ENCODE measurements at regions of chr6 and their contacts with region 1.

Region 1: DNA sequence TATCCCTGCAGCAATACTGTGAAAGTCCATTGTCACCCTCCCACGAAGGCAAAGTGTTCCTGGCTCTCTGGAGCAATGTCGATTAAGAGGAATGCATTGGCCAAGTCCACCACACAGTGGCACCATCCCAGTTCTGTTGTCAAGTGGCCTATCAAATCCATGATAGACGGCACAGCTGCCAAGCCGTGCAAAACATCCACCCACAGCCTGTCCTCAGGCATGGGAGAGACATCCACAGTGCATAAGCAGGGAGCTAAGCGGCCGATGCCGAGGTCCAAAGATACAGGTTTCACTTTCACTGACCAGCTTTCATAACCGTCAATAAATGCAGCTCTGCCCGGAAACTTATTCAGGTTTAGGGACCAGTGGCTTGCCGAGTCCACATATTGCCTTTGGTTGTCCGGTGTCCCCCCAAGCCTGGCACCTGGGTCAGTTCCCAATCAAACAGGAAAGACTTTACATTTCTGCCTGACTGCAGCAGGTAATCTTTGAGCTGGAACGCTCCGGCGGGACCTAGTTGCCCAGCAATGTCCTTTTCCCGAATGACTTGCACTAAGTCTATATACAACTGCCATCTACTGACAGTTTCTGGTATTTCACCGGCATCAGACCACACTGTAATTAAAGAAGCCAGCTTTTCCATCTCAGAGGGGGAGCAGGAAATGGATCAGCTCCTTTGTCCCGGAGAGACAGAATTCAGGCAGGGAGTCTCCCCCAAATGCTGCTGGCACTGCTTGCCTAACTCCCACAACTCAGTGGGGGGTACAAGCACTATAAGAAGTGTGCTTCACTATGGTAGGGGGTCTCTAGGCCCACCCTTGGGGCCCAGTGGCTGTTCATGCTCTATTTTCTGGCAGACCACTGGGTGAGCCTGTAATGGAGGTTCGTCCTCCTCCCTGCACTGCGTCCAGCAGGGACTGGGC is 6.3 kb downstream of the ZKSCAN3 start:
- DNase-seq: peak; percentile 70
- ATAC-seq: peak; percentile 91
- H3K4me3 Mint-ChIP-seq: peak overlapping the region; percentile 82
- H3K27ac Mint-ChIP-seq: peak overlapping the region; percentile 80
- H3K4me1 Mint-ChIP-seq: peaks cover 21% of the 10 kb centered on the region
- H3K27me3 Mint-ChIP-seq: no peaks in the 10 kb centered on the region
- CTCF ChIP-seq: peak; percentile 90

Region 2: DNA sequence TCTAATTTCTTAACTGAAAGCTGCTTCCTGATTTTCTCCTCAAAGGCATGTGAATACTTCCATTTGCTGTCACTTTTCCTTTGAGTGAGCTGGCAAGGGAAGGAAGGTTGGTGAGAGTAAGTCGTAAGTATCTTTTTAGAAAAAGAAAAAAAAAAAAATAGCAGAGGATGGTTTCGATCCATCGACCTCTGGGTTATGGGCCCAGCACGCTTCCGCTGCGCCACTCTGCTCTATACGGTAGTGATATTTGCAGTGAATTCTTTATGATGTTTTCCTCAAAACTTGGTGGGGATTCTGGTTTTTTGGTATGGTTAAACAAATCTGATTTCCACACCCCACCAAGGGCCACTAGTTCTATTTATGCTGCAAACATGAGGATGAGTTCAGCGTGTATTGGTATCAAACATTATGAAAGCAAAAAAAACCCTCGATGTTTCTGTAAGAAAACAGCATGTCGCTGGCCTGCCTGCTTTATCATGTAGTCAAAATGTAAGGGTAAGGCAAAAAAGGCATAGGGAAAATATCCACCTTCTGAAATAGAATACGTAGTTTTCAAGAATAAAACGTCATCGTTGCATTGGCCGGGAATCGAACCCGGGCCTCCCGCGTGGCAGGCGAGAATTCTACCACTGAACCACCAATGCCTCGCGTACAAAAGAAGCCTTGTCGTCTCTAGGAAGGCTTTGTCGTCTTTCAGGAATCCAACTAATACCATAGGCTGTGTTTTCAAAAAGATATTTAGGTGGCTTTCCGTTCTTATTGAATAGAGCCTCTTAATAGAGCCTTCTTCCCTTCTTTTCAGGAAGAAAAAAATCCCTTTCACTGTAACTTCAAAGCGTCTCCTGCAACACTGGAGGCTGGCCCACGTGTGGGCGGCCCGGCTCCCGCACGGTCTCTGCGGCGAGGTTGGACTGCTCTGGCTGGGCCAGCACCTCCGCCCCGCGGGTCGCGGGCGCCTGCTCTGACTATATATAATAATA is 453.4 kb before region 1 on chr6:
- CTCF ChIA-PET with region 1: interaction called, 3 read pairs
- POLR2A ChIA-PET with region 1: no interaction called
- intact Hi-C with region 1: loop called (anchors 10 kb)
- DNase-seq: peak; percentile 91
- ATAC-seq: peak; percentile 74
- H3K4me3 Mint-ChIP-seq: peak overlapping the region; percentile 78
- H3K27ac Mint-ChIP-seq: peak overlapping the region; percentile 90
- H3K4me1 Mint-ChIP-seq: peaks cover 7% of the 10 kb centered on the region
- H3K27me3 Mint-ChIP-seq: peaks cover 6% of the 10 kb centered on the region
- CTCF ChIP-seq: no peak

Region 3: GRCh38 chr6:28136585-28137504 is 219.2 kb before region 1 on chr6:
- CTCF ChIA-PET with region 1: interaction called, 18 read pairs
- POLR2A ChIA-PET with region 1: interaction called, 5 read pairs
- intact Hi-C with region 1: loop called (anchors 2 kb)
- DNase-seq: peak; percentile 83
- ATAC-seq: peak; percentile 52
- H3K4me3 Mint-ChIP-seq: peak overlapping the region; percentile 87
- H3K27ac Mint-ChIP-seq: peak overlapping the region; percentile 98
- H3K4me1 Mint-ChIP-seq: peaks cover 60% of the 10 kb centered on the region
- H3K27me3 Mint-ChIP-seq: no peaks in the 10 kb centered on the region
- CTCF ChIP-seq: no peak

Region 4: DNA sequence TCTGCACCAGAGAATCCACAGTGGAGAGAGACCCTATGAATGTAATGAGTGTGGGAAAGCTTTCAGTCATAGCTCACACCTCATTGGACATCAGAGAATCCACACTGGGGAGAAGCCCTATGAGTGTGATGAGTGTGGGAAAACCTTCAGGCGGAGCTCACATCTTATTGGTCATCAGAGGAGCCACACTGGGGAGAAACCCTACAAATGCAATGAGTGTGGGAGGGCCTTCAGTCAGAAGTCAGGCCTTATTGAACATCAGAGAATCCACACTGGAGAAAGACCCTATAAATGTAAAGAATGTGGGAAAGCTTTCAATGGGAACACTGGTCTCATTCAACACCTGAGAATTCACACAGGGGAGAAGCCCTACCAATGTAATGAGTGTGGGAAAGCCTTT is 202.5 kb before region 1 on chr6:
- CTCF ChIA-PET with region 1: interaction called, 11 read pairs
- POLR2A ChIA-PET with region 1: no interaction called
- intact Hi-C with region 1: no loop called
- DNase-seq: no peak
- ATAC-seq: no peak
- H3K4me3 Mint-ChIP-seq: no peak overlapping the region
- H3K27ac Mint-ChIP-seq: no peak overlapping the region
- H3K4me1 Mint-ChIP-seq: no peaks in the 10 kb centered on the region
- H3K27me3 Mint-ChIP-seq: no peaks in the 10 kb centered on the region
- CTCF ChIP-seq: no peak

Region 5: DNA sequence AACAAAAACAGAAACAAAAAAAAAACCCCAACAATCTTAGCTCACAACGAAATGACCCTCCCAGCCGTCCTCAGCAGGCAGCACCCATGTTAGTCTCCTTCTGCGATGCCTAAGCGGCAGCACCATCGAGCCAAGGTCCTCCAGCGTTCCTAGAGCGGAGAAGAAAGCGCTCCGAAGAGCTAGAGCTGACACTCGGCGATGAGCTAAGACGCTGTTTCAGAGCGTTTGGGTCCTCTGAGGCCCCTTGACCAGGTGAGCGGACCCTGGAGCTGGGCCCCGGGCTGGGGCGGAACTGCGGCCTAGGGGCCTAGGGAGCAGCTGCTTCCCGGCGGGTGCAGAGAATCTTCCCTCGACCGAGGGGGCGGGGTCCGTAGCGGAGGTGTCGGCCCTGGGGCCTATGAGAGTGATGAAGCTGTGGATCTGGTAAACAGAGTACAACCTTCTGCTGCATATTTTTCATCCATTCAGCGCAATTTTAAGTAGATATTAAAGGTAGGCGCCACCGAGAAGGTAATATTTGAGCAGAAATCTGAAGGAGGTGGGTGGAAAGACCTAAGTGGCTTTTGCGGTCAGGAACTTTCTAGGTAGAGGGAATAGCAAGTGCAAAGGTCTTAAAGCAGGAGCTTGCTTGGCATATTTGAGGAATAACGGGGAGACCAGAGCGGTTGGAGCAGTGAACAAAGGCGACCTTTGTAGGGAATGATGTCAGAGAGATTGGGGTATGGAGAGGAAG is 88.9 kb before region 1 on chr6 and contains the start of gene ZSCAN26:
- CTCF ChIA-PET with region 1: interaction called, 17 read pairs
- POLR2A ChIA-PET with region 1: interaction called, 4 read pairs
- intact Hi-C with region 1: loop called (anchors 10 kb)
- DNase-seq: peak; percentile 93
- ATAC-seq: peak; percentile 94
- H3K4me3 Mint-ChIP-seq: no peak within 1 kb of the TSS
- H3K27ac Mint-ChIP-seq: no peak within 1 kb of the TSS
- H3K4me1 Mint-ChIP-seq: peaks cover 28% of the 10 kb centered on the region
- H3K27me3 Mint-ChIP-seq: no peaks in the 10 kb centered on the region
- CTCF ChIP-seq: no peak
- total RNA-seq, gene ZSCAN26: 3.6 to 3.8 TPM

Region 6: DNA sequence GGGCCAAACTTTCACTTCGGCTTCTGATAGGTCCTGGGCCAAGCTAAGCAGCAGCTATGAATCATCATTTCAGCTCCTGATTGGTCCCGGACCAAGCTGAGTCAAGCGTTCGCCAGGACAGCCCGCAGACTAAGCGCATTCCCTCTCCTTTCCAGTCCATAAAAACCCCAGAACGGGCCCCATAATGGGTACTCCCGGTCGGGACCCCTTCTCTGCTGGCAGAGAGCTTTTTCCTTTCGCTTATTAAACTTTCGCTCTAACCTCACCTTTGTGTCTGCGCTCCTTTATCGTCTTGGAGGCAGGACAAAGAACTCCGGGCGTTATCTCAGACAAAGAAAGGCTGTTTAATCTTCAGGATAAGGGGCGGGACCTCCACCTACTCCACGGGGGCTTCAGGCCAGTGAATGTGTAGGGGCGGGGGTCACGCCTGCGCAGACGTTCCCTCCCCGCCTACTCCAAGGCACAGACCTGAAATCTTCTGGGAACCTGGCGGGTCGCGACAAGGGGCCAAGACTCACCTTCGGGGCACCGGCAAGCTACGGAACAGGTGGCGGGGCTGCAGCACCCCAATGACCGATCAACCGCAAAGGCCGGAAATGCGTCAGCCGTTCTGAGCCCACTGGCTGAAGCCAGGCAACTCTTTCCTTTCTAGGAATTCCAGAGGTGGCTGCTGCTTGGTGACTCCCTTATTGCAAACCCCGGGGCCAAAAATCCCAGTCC is 20.3 kb before region 1 on chr6 and contains the start of gene ZSCAN31:
- CTCF ChIA-PET with region 1: interaction called, 19 read pairs
- POLR2A ChIA-PET with region 1: interaction called, 5 read pairs
- intact Hi-C with region 1: no loop called
- DNase-seq: peak; percentile 89
- ATAC-seq: peak; percentile 91
- H3K4me3 Mint-ChIP-seq: no peak within 1 kb of the TSS
- H3K27ac Mint-ChIP-seq: no peak within 1 kb of the TSS
- H3K4me1 Mint-ChIP-seq: peaks cover 10% of the 10 kb centered on the region
- H3K27me3 Mint-ChIP-seq: no peaks in the 10 kb centered on the region
- CTCF ChIP-seq: no peak
- total RNA-seq, gene ZSCAN31: 1.6 to 2.0 TPM

Region 7: DNA sequence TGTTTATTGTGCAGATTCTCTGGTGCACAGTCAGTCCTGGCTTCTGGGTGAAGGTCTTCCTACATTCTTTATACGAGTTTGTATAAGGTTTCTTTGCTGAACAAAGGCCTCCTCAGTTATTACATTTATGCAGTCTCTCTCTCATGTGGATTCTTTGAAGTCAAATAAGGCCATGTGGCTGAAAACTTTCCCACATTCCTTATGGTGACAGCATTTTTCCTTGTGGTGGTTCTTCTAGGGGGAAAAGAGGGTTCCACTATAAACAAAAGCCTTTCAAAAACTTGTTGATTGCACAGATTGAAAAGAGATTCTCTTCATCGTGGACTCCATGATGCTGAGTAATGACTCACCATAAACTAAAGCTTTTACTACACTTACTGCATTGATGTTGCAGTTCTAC is 24.4 kb after region 1 on chr6:
- CTCF ChIA-PET with region 1: interaction called, 11 read pairs
- POLR2A ChIA-PET with region 1: no interaction called
- intact Hi-C with region 1: no loop called
- DNase-seq: no peak
- ATAC-seq: no peak
- H3K4me3 Mint-ChIP-seq: no peak overlapping the region
- H3K27ac Mint-ChIP-seq: no peak overlapping the region
- H3K4me1 Mint-ChIP-seq: peaks cover 18% of the 10 kb centered on the region
- H3K27me3 Mint-ChIP-seq: no peaks in the 10 kb centered on the region
- CTCF ChIP-seq: no peak